HepG2 (cell line): ENCODE measurements at regions of chr3 and their contacts with region 1.

Region 1: GRCh38 chr3:24237971-24238767 is 256.5 kb downstream of the THRB start:
- DNase-seq: peak; percentile 64
- ATAC-seq: peak; percentile 88
- H3K4me3 ChIP-seq: no peak overlapping the region
- H3K27ac ChIP-seq: no peak overlapping the region
- H3K4me1 ChIP-seq: peaks cover 11% of the 10 kb centered on the region
- H3K27me3 ChIP-seq: no peaks in the 10 kb centered on the region
- CTCF ChIP-seq: peak; percentile 80
- EP300 ChIP-seq: no peak
- POLR2A ChIP-seq: no peak
- RAD21 ChIP-seq: no peak; the same call in 1 of the 2 replicates

Region 2: GRCh38 chr3:23533996-23534395 is 704.2 kb before region 1 on chr3:
- CTCF ChIA-PET with region 1: no interaction called
- POLR2A ChIA-PET with region 1: no interaction called
- in situ Hi-C with region 1: no loop called
- intact Hi-C with region 1: no loop called
- DNase-seq: no peak
- ATAC-seq: no peak
- H3K4me3 ChIP-seq: no peak overlapping the region
- H3K27ac ChIP-seq: no peak overlapping the region
- H3K4me1 ChIP-seq: no peaks in the 10 kb centered on the region
- H3K27me3 ChIP-seq: no peaks in the 10 kb centered on the region
- CTCF ChIP-seq: no peak
- EP300 ChIP-seq: no peak
- POLR2A ChIP-seq: no peak
- RAD21 ChIP-seq: no peak

Region 3: DNA sequence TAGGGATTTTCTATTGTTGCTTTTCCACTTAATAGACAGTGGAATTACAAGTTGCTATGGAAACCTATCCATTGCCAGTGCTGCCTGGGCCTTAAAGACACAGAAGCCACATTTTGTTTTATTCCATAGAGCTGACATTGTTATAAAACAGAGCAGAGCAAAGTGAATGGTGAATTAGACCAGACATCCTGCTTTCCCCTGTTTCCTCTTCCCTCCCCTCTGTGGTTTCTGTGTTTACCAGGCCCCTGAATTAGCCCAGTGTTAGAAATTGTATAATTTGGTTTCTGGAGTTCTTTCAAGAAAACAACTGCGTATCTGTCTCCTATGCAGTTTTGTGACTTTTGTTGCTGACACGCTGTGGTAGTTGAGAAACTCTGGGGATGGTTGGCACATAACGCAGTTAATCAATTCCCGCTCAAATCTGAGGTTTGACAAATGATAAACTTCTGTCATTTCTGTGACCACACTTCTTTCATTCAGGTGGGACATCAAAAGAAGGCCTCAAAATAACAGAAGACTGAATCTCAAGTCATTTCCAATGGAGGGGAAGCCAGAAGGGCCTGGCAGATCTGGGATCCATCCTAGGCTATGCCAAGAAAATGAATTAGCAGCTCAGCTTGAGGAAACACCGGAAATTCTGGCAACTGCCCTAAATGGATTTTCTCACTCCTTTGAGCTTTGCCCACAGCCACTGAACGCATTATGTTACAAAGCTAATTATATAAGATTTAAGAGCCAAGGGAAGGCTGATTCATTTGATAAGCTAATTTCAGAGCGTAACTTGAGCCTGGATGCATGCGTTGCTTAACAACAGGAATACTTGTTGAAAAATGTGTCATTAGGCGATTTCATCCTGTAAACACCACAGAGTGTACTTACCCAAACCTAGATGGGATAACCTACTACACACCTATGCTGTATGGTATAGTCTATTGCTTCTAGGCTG is 246.2 kb before region 1 on chr3:
- CTCF ChIA-PET with region 1: no interaction called
- POLR2A ChIA-PET with region 1: no interaction called
- in situ Hi-C with region 1: loop called (anchors 5 kb)
- intact Hi-C with region 1: no loop called
- DNase-seq: no peak
- ATAC-seq: no peak
- H3K4me3 ChIP-seq: no peak overlapping the region
- H3K27ac ChIP-seq: no peak overlapping the region
- H3K4me1 ChIP-seq: no peaks in the 10 kb centered on the region
- H3K27me3 ChIP-seq: peaks cover 1 to 21% of the 10 kb centered on the region in 2 experiments; a peak in 2 of 5 replicates
- CTCF ChIP-seq: no peak
- EP300 ChIP-seq: no peak
- POLR2A ChIP-seq: no peak
- RAD21 ChIP-seq: no peak

Region 4: DNA sequence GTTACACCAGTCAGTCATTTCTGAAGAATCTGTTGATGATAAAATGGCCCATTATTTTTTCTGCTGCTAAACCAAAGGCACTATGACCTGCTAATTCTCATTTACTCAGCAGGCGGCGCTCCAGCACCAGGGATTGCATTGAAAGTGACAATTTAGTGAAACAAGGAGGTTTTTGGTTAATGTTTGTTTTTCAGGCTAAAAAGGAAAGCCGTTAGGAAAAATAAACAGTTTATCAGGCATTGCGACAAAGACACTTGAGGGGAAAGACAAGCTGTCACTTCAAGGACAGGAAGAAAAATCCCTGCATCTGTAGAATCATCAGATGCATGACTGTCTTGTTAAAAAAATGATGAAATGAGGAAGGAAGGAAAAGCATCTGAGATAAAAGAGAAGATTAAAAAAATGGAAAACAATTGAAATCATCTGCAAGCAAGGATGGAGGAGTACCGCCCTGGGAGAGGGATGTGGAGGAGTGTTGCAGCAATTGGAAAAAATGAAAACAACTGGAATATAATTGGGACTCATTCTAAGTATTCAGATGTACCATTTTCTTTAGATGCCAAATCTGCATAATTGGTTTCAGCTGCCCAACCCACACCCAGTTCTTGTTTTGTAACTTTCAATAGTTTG is 239.0 kb before region 1 on chr3:
- CTCF ChIA-PET with region 1: interaction called, 19 read pairs
- POLR2A ChIA-PET with region 1: no interaction called
- in situ Hi-C with region 1: loop called (anchors 5 kb)
- intact Hi-C with region 1: loop called (anchors 1 kb)
- DNase-seq: peak; percentile 45
- ATAC-seq: peak; percentile 53; the same call in 2 of the 3 replicates
- H3K4me3 ChIP-seq: no peak overlapping the region
- H3K27ac ChIP-seq: no peak overlapping the region
- H3K4me1 ChIP-seq: no peaks in the 10 kb centered on the region
- H3K27me3 ChIP-seq: peaks cover 0 to 18% of the 10 kb centered on the region in 2 experiments; a peak in 2 of 5 replicates
- CTCF ChIP-seq: peak; percentile 89
- EP300 ChIP-seq: no peak; a peak in 1 of 4 replicates
- POLR2A ChIP-seq: no peak
- RAD21 ChIP-seq: peak; percentile 84

Region 5: GRCh38 chr3:24069045-24069444 is 169.1 kb before region 1 on chr3:
- CTCF ChIA-PET with region 1: interaction called, 13 read pairs
- POLR2A ChIA-PET with region 1: no interaction called
- in situ Hi-C with region 1: loop called (anchors 10 kb)
- intact Hi-C with region 1: loop called (anchors 1 kb)
- DNase-seq: peak; percentile 5
- ATAC-seq: no peak; the same call in 2 of the 3 replicates
- H3K4me3 ChIP-seq: no peak overlapping the region
- H3K27ac ChIP-seq: no peak overlapping the region
- H3K4me1 ChIP-seq: no peaks in the 10 kb centered on the region
- H3K27me3 ChIP-seq: no peaks in the 10 kb centered on the region; a peak in 2 of 5 replicates
- CTCF ChIP-seq: peak; percentile 58
- EP300 ChIP-seq: no peak
- POLR2A ChIP-seq: no peak
- RAD21 ChIP-seq: 0 out of 2 replicates have a peak, but pooled peaks have one; percentile 32

Region 6: DNA sequence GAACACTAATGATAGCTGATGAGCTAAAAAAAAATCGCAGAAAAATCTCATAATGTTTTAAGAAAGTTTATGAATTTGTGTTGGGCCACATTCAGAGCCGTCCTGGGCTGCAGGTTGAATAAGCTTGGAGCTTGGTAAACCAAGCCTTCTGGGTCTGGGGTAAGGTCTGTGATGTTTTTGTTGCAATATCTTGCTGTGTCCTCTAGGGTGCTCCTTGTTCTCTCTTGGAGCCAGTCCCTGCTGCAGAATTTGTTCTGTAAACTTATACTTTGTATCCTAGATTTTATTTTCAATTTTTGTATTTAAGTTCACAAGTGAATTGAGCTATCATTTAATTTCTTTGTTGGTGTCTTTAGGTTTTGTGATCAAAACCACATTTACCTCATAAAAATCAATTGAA is 149.4 kb before region 1 on chr3:
- CTCF ChIA-PET with region 1: interaction called, 3 read pairs
- POLR2A ChIA-PET with region 1: no interaction called
- in situ Hi-C with region 1: no loop called
- intact Hi-C with region 1: loop called (anchors 5 kb)
- DNase-seq: peak; percentile 20
- ATAC-seq: peak; percentile 94
- H3K4me3 ChIP-seq: no peak overlapping the region
- H3K27ac ChIP-seq: no peak overlapping the region
- H3K4me1 ChIP-seq: peaks cover 22% of the 10 kb centered on the region
- H3K27me3 ChIP-seq: no peaks in the 10 kb centered on the region; a peak in 1 of 5 replicates
- CTCF ChIP-seq: peak; percentile 57
- EP300 ChIP-seq: no peak
- POLR2A ChIP-seq: no peak
- RAD21 ChIP-seq: 0 out of 2 replicates have a peak, but pooled peaks have one; percentile 18

Region 7: DNA sequence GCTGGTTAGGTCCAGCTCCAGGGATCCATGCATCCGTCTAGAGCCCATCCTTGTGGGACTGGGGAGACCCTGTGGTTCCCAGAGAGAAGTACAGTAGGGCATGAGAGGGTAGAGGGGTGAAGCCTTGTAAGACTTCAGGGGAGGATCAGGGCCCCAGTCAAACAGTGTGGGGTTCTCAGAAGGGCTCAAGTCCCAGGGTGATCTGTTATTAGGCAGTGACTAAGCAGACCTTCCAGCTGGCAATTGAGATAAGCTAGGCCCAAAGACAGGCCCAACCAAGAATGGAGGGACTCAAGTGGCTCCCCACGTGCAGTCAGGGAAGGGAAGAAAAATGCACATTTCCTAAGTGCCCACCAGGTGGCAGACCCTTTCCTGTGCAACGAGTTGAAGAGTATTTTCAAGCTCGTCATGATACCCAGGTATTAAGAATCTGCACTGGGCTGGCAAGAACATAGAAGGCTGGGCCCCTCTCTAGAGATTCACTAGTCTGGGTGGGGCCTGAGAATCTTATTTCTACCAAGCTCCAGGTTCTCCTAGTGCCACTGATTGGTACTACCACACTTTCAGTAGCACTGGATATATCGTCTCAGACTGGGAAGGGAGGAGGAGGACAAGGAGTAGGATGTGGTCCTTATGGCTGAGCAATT is 52.3 kb before region 1 on chr3:
- CTCF ChIA-PET with region 1: interaction called, 8 read pairs
- POLR2A ChIA-PET with region 1: no interaction called
- in situ Hi-C with region 1: no loop called
- intact Hi-C with region 1: loop called (anchors 2 kb)
- DNase-seq: peak; percentile 26
- ATAC-seq: peak; percentile 88
- H3K4me3 ChIP-seq: no peak overlapping the region
- H3K27ac ChIP-seq: no peak overlapping the region
- H3K4me1 ChIP-seq: no peaks in the 10 kb centered on the region
- H3K27me3 ChIP-seq: no peaks in the 10 kb centered on the region
- CTCF ChIP-seq: peak; percentile 73
- EP300 ChIP-seq: no peak
- POLR2A ChIP-seq: no peak
- RAD21 ChIP-seq: 0 out of 2 replicates have a peak, but pooled peaks have one; percentile 39